Activated naive CD4-positive, alpha-beta T cell treated with anti-CD3 and anti-CD28 coated beads for 36 hours (primary cell): ENCODE measurements at regions of chr5 and their contacts with region 1.

Region 1: GRCh38 chr5:36728697-36729543 is 122.5 kb downstream of the SLC1A3 start:
- DNase-seq: peak; percentile 26
- H3K4me3 Mint-ChIP-seq: no peak overlapping the region
- H3K27ac Mint-ChIP-seq: no peak overlapping the region
- H3K4me1 Mint-ChIP-seq: peaks cover 9% of the 10 kb centered on the region
- H3K27me3 Mint-ChIP-seq: peaks cover 2% of the 10 kb centered on the region

Region 2: DNA sequence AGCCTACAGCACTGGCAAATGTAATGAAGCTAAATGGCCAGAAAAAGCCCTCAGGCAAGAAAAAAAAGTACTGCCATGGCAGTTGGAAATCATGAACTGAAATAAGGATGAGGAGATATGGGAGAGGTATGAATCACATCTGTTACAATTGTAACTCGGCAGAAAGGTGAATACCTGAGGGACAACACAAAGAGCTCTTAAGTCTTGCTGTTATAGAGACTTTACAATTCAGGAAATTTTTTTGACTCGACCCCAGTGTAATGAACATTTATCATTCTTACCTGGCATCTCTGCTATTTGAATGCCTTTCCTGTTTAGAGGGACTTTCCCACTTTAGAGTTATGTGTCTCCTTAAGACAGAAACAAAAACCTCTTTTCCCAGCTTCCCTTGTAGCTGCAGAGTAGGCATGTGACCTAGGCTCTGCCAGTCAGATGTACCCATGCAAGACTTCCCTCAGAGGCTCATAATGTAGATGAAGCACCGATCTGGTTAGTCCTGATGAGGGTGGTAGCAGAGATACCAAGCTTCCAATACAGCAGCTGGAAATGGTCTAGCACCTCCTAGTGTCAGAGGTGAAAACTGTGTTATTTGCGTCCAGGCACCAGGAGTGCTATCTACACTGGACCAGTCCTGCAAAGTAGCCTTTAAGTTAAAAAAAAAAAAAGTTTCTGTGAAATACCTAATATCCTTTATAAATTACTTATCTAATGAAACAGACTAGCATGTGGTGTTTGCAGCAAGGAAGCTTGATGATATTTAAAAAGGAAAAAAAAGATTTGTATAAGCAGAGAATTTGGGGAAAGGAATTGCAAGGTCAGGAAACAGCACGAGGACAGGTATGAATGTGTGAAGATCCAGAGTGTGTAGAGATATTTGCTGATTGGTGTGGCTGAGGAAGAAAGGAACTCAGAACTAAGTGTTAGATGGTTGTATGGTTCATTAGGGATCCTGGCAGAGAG is 269.5 kb before region 1 on chr5:
- CTCF ChIA-PET with region 1: no interaction called
- intact Hi-C with region 1: no loop called
- DNase-seq: peak; percentile 8
- H3K4me3 Mint-ChIP-seq: no peak overlapping the region
- H3K27ac Mint-ChIP-seq: no peak overlapping the region
- H3K4me1 Mint-ChIP-seq: no peaks in the 10 kb centered on the region
- H3K27me3 Mint-ChIP-seq: peaks cover 10% of the 10 kb centered on the region

Region 3: DNA sequence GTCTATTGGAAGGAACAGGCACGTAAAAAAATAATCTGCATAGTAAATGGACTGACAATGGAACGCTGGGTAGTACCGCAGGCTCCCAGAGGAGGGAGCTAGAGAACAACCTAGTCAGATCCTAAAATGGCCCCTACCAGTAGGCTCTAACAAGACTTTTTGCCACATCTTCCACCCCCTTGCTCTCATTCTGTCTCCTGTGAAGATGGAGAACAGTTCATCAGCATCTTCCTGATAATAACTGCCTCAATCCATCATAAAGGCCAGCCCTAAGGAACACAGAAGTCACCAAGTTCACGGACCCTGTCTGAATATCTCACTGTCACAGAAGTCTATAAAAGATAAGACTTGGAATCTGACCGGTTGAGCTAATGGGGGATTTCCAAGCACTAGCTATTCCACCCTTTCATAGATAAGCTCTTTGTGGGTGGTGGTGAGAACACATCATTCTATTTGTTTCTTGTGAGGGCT is 10.9 kb after region 1 on chr5:
- CTCF ChIA-PET with region 1: interaction called, 32 read pairs
- intact Hi-C with region 1: no loop called
- DNase-seq: peak; percentile 88
- H3K4me3 Mint-ChIP-seq: no peak overlapping the region
- H3K27ac Mint-ChIP-seq: no peak overlapping the region
- H3K4me1 Mint-ChIP-seq: peaks cover 9% of the 10 kb centered on the region
- H3K27me3 Mint-ChIP-seq: peaks cover 19% of the 10 kb centered on the region

Region 4: DNA sequence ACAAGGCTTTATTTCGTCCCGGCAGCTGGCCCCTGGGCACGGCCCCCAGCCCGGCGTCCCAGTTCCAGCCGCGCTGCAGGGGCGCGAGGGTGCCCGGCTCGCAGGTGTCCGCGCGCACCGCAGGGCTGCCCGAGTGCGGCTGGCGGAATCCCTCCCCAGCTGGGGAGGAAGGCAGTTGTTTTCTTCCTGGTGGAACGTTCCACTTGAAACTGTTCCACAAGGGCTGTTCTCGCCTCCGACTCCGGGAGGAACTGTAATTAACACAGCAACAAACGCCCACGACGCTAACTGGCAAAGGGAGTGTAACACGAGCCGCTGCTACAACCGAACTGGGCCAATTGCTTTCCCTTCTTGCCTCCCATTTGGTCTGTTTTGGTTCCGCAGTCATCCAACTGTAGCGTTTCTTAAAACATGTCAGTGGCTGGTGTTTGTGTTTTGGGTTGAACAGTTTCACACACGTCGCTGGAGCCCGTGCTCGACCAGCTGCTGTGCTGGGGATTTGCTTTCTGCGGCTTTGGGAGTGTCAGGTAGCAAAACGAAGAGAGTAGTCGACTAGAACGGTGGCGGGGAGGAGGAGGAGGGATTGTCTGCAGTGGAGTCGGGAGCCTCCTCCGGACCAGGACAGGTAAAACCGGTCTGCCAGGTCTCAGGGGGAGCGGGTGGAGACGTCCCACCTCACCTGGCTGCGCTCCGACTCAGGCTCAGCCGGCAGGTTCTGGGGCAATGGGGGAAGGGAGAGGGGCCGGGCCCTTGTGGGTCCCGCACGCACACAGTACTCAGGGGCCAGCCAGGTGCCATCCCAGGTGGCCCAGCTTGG is 16.1 kb after region 1 on chr5:
- CTCF ChIA-PET with region 1: interaction called, 32 read pairs
- intact Hi-C with region 1: no loop called
- DNase-seq: peak; percentile 42
- H3K4me3 Mint-ChIP-seq: peak overlapping the region; percentile 80
- H3K27ac Mint-ChIP-seq: no peak overlapping the region
- H3K4me1 Mint-ChIP-seq: peaks cover 10% of the 10 kb centered on the region
- H3K27me3 Mint-ChIP-seq: peaks cover 36% of the 10 kb centered on the region

Region 5: GRCh38 chr5:36870399-36871040 is 141.6 kb after region 1 on chr5:
- CTCF ChIA-PET with region 1: interaction called, 10 read pairs
- intact Hi-C with region 1: loop called (anchors 1 kb)
- DNase-seq: no peak
- H3K4me3 Mint-ChIP-seq: no peak overlapping the region
- H3K27ac Mint-ChIP-seq: no peak overlapping the region
- H3K4me1 Mint-ChIP-seq: peaks cover 23% of the 10 kb centered on the region
- H3K27me3 Mint-ChIP-seq: no peaks in the 10 kb centered on the region

Region 6: DNA sequence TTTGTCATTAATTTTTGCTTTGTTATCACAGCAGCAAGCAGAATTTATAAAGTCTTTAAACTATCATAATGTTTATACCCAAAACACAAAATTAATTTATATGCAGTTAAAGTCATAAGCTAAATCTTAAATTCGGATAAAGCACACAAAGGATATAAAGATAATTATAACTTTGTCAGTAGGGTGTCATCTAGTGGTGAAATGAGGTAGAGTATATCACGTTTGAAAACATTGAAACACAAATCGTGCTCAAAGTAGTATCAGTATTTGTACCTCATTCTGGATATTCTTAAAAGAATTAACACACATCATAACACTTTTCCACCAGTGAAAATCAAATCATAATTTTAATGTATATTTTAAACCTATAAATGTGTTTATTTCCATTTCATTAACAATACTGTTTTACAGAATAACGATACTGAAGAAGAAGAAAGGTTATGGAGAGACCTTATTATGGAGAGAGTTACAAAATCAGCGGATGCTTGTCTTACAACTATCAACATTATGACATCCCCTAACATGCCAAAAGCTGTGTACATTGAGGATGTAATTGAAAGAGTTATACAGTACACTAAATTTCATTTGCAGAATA is 277.1 kb after region 1 on chr5:
- CTCF ChIA-PET with region 1: interaction called, 12 read pairs
- intact Hi-C with region 1: no loop called
- DNase-seq: no peak
- H3K4me3 Mint-ChIP-seq: no peak overlapping the region
- H3K27ac Mint-ChIP-seq: no peak overlapping the region
- H3K4me1 Mint-ChIP-seq: no peaks in the 10 kb centered on the region
- H3K27me3 Mint-ChIP-seq: no peaks in the 10 kb centered on the region

Region 7: GRCh38 chr5:37370864-37371726 is 642.2 kb after region 1 on chr5 and contains the start of gene NUP155:
- CTCF ChIA-PET with region 1: no interaction called
- intact Hi-C with region 1: loop called (anchors 5 kb)
- DNase-seq: peak; percentile 94
- H3K4me3 Mint-ChIP-seq: peak within 1 kb of the TSS; percentile 99
- H3K27ac Mint-ChIP-seq: peak within 1 kb of the TSS; percentile 96
- H3K4me1 Mint-ChIP-seq: peaks cover 37% of the 10 kb centered on the region
- H3K27me3 Mint-ChIP-seq: no peaks in the 10 kb centered on the region
- total RNA-seq, gene NUP155: 79.2 to 87.8 TPM